ENCODE measurements at regions of chr3 and their contacts with region 1.

Region 1: GRCh38 chr3:153768561-153769469 is 352.4 kb upstream of the ARHGEF26 start:
- DNase-seq: peak in 1 of 2 experiments; percentile 59
- H3K4me3 ChIP-seq: no peak overlapping the region
- H3K4me3 Mint-ChIP-seq: no peak overlapping the region
- H3K27ac Mint-ChIP-seq: no peak overlapping the region
- H3K4me1 ChIP-seq: no peaks in the 10 kb centered on the region
- H3K4me1 Mint-ChIP-seq: no peaks in the 10 kb centered on the region
- H3K27me3 ChIP-seq: no peaks in the 10 kb centered on the region
- H3K27me3 Mint-ChIP-seq: peaks cover 7% of the 10 kb centered on the region
- CTCF ChIP-seq: peak; percentile 77 to 80

Region 2: GRCh38 chr3:153026026-153026425 is 742.8 kb before region 1 on chr3:
- CTCF ChIA-PET with region 1: no interaction called
- POLR2A ChIA-PET with region 1: no interaction called
- intact Hi-C with region 1: loop called (anchors 2 kb)
- DNase-seq: peak in 1 of 2 experiments; percentile 12
- H3K4me3 ChIP-seq: no peak overlapping the region
- H3K4me3 Mint-ChIP-seq: no peak overlapping the region
- H3K27ac Mint-ChIP-seq: no peak overlapping the region
- H3K4me1 ChIP-seq: no peaks in the 10 kb centered on the region
- H3K4me1 Mint-ChIP-seq: no peaks in the 10 kb centered on the region
- H3K27me3 ChIP-seq: no peaks in the 10 kb centered on the region
- H3K27me3 Mint-ChIP-seq: peaks cover 5% of the 10 kb centered on the region
- CTCF ChIP-seq: peak; percentile 49 to 54

Region 3: GRCh38 chr3:153043729-153044328 is 725.0 kb before region 1 on chr3:
- CTCF ChIA-PET with region 1: no interaction called
- POLR2A ChIA-PET with region 1: no interaction called
- intact Hi-C with region 1: loop called (anchors 1 kb)
- DNase-seq: no peak
- H3K4me3 ChIP-seq: no peak overlapping the region
- H3K4me3 Mint-ChIP-seq: peak overlapping the region; percentile 39
- H3K27ac Mint-ChIP-seq: peak overlapping the region; percentile 34
- H3K4me1 ChIP-seq: no peaks in the 10 kb centered on the region
- H3K4me1 Mint-ChIP-seq: peaks cover 6% of the 10 kb centered on the region
- H3K27me3 ChIP-seq: no peaks in the 10 kb centered on the region
- H3K27me3 Mint-ChIP-seq: no peaks in the 10 kb centered on the region
- CTCF ChIP-seq: no peak

Region 4: DNA sequence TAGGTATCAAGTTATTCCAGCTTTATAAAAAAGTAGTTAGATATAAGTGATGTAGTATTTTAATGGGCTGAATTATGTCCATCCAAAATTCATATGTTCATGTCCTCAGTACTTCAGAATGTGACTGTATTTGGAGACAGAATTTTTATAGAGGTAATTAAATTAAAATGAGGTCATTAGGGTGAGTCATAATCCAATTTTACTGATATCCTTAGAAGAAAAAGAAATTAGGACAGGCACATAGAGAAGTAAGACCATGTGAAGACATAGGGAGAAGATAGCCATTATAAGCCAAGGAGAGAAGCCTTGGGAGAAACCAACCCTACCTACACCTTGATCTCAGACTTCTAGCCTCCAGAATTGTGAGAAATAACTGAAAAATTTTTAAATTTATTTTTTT is 576.5 kb before region 1 on chr3:
- CTCF ChIA-PET with region 1: no interaction called
- POLR2A ChIA-PET with region 1: no interaction called
- intact Hi-C with region 1: loop called (anchors 10 kb)
- DNase-seq: no peak
- H3K4me3 ChIP-seq: no peak overlapping the region
- H3K4me3 Mint-ChIP-seq: no peak overlapping the region
- H3K27ac Mint-ChIP-seq: no peak overlapping the region
- H3K4me1 ChIP-seq: no peaks in the 10 kb centered on the region
- H3K4me1 Mint-ChIP-seq: no peaks in the 10 kb centered on the region
- H3K27me3 ChIP-seq: no peaks in the 10 kb centered on the region
- H3K27me3 Mint-ChIP-seq: peaks cover 4% of the 10 kb centered on the region
- CTCF ChIP-seq: no peak

Region 5: GRCh38 chr3:153291056-153291685 is 477.6 kb before region 1 on chr3:
- CTCF ChIA-PET with region 1: no interaction called
- POLR2A ChIA-PET with region 1: no interaction called
- intact Hi-C with region 1: loop called (anchors 1 kb)
- DNase-seq: peak in 1 of 2 experiments; percentile 29
- H3K4me3 ChIP-seq: no peak overlapping the region
- H3K4me3 Mint-ChIP-seq: no peak overlapping the region
- H3K27ac Mint-ChIP-seq: no peak overlapping the region
- H3K4me1 ChIP-seq: no peaks in the 10 kb centered on the region
- H3K4me1 Mint-ChIP-seq: no peaks in the 10 kb centered on the region
- H3K27me3 ChIP-seq: no peaks in the 10 kb centered on the region
- H3K27me3 Mint-ChIP-seq: no peaks in the 10 kb centered on the region
- CTCF ChIP-seq: peak; percentile 51 to 63

Region 6: DNA sequence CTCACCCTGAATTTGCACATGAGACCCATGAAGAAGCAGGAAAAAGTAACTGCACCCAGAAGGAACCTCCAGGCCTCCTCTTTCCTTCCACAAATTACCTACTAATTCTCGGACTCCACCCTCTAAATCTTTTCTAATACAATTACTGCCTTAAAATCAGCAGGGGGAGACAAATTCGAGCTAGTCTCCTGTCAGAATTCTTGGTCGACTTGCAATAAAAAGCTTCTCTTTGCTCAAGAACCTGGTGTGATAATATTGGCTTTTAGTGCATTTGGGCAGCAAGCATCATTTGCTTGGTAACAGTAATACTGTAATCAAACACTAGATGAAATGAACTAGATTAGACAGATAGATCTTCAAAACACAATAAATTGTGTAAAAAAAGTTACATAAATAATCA is 324.9 kb before region 1 on chr3:
- CTCF ChIA-PET with region 1: interaction called, 3 read pairs
- POLR2A ChIA-PET with region 1: no interaction called
- intact Hi-C with region 1: loop called (anchors 1 kb)
- DNase-seq: peak in 1 of 2 experiments; percentile 15
- H3K4me3 ChIP-seq: no peak overlapping the region
- H3K4me3 Mint-ChIP-seq: no peak overlapping the region
- H3K27ac Mint-ChIP-seq: no peak overlapping the region
- H3K4me1 ChIP-seq: no peaks in the 10 kb centered on the region
- H3K4me1 Mint-ChIP-seq: peaks cover 5% of the 10 kb centered on the region
- H3K27me3 ChIP-seq: no peaks in the 10 kb centered on the region
- H3K27me3 Mint-ChIP-seq: no peaks in the 10 kb centered on the region
- CTCF ChIP-seq: peak; percentile 20 to 33

Region 7: GRCh38 chr3:153704115-153704514 is 64.7 kb before region 1 on chr3:
- CTCF ChIA-PET with region 1: no interaction called
- POLR2A ChIA-PET with region 1: no interaction called
- intact Hi-C with region 1: loop called (anchors 1 kb)
- DNase-seq: no peak
- H3K4me3 ChIP-seq: no peak overlapping the region
- H3K4me3 Mint-ChIP-seq: no peak overlapping the region
- H3K27ac Mint-ChIP-seq: no peak overlapping the region
- H3K4me1 ChIP-seq: no peaks in the 10 kb centered on the region
- H3K4me1 Mint-ChIP-seq: no peaks in the 10 kb centered on the region
- H3K27me3 ChIP-seq: no peaks in the 10 kb centered on the region
- H3K27me3 Mint-ChIP-seq: peaks cover 7% of the 10 kb centered on the region
- CTCF ChIP-seq: no peak

Measured in Caco-2 (cell line).